ENCODE measurements at regions of chrX and their contacts with region 1.

Region 1: DNA sequence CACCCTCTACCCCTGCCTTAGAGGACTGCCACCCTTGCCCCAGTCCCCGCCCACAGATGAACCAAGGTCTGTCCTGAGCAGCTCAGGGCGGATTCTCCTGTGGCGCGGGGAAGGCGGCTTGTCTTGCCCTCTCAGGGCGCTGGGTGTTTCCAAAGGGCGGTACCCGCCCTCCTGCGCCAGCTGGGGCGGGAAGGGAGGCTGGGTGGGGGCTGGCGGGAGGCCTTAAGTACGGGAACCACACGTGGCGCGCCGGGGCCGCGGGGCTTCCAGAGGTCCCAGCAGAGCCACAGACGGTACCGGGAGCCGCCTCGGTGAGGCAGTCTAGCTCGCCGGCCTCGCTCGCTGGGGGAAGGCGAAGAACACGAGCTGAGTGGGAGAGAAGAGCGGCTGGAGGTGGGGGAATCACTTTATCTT is 361.1 kb downstream of the MID1IP1 start:
- DNase-seq: peak; percentile 71
- H3K4me3 Mint-ChIP-seq: peak overlapping the region; percentile 64
- H3K27ac Mint-ChIP-seq: peak overlapping the region; percentile 78
- H3K4me1 Mint-ChIP-seq: peaks cover 39% of the 10 kb centered on the region
- H3K27me3 Mint-ChIP-seq: peaks cover 2% of the 10 kb centered on the region

Region 2: DNA sequence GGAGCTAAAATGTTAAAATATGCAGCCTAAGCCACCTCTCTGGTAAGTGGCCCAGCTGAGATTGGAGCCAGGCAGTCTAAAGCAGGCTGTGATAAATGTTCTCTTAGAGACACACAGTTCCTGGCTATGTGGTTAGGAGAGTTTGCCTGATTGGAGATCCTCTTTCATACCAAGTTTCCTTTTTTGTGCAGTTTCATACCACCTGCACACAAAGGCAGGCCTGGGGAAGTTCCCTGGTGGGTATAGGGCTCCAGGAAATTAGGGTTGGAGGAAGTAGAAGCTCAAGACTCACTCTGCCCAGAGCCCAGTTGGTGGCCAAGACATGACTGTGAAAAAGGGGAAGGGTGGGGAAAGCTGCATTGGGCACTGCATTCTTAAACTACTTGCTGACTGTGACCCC is 1365.5 kb before region 1 on chrX:
- intact Hi-C with region 1: no loop called
- DNase-seq: no peak
- H3K4me3 Mint-ChIP-seq: no peak overlapping the region
- H3K27ac Mint-ChIP-seq: no peak overlapping the region
- H3K4me1 Mint-ChIP-seq: peaks cover 3% of the 10 kb centered on the region
- H3K27me3 Mint-ChIP-seq: no peaks in the 10 kb centered on the region

Region 3: GRCh38 chrX:39196192-39197102 is 34.1 kb after region 1 on chrX:
- intact Hi-C with region 1: loop called (anchors 1 kb)
- DNase-seq: peak; percentile 85
- H3K4me3 Mint-ChIP-seq: peak overlapping the region; percentile 47
- H3K27ac Mint-ChIP-seq: peak overlapping the region; percentile 91
- H3K4me1 Mint-ChIP-seq: peaks cover 47% of the 10 kb centered on the region
- H3K27me3 Mint-ChIP-seq: no peaks in the 10 kb centered on the region

Region 4: DNA sequence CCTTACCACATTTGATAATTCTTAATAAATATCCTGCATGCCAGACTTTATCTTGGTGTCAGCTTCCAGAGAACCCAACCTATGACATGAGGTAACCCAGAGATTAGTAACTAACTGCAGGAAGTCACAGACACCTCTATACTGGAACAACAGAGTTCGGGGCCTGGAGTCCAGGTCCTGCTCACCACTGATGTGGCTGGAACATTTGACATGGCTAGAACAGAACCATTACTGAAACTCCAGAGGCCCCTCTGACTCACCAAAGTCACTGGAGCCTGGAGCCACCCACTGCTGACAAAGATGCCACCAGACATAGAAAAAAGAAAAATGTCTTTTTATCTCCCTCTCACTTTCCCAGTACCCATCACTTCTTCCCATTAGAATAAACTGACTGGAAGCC is 42.6 kb after region 1 on chrX:
- intact Hi-C with region 1: loop called (anchors 2 kb)
- DNase-seq: no peak
- H3K4me3 Mint-ChIP-seq: peak overlapping the region; percentile 47
- H3K27ac Mint-ChIP-seq: peak overlapping the region; percentile 86
- H3K4me1 Mint-ChIP-seq: peaks cover 55% of the 10 kb centered on the region
- H3K27me3 Mint-ChIP-seq: no peaks in the 10 kb centered on the region

Region 5: DNA sequence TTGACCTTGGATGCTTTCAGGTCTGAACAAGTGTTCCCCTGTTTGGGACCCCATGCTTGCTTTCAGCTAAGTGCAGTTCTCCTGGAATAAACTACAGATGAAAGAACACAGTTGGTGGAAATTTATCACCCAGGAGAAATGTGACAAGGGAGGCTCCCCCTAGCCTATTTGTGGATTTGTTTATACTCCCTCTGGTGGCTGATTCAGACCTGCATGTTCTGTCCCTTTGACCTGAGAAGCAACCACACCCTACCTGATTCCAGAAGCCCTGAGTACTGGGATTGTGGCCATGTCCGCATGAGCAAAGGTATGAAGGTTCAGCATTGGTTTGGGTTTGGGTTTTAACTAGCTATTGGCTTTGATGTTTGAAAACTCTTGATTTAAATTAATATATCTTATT is 79.9 kb after region 1 on chrX:
- intact Hi-C with region 1: loop called (anchors 5 kb)
- DNase-seq: peak; percentile 61
- H3K4me3 Mint-ChIP-seq: no peak overlapping the region
- H3K27ac Mint-ChIP-seq: no peak overlapping the region
- H3K4me1 Mint-ChIP-seq: peaks cover 19% of the 10 kb centered on the region
- H3K27me3 Mint-ChIP-seq: no peaks in the 10 kb centered on the region

Region 6: GRCh38 chrX:39491548-39492297 is 329.4 kb after region 1 on chrX:
- intact Hi-C with region 1: no loop called
- DNase-seq: peak; percentile 82
- H3K4me3 Mint-ChIP-seq: peak overlapping the region; percentile 21
- H3K27ac Mint-ChIP-seq: peak overlapping the region; percentile 54
- H3K4me1 Mint-ChIP-seq: peaks cover 37% of the 10 kb centered on the region
- H3K27me3 Mint-ChIP-seq: no peaks in the 10 kb centered on the region